PC-3 (cell line): ENCODE measurements at regions of chr1 and their contacts with region 1.

Region 1: GRCh38 chr1:161382214-161383019 is 14.7 kb upstream of the CFAP126 start:
- DNase-seq: peak; percentile 91
- ATAC-seq: peak; percentile 92
- H3K4me3 ChIP-seq: peak overlapping the region; percentile 44; the same call in 1 of the 2 replicates
- H3K27ac ChIP-seq: peak overlapping the region; percentile 87
- H3K4me1 ChIP-seq: peaks cover 22% of the 10 kb centered on the region
- H3K27me3 ChIP-seq: no peaks in the 10 kb centered on the region
- CTCF ChIP-seq: peak; percentile 84

Region 2: DNA sequence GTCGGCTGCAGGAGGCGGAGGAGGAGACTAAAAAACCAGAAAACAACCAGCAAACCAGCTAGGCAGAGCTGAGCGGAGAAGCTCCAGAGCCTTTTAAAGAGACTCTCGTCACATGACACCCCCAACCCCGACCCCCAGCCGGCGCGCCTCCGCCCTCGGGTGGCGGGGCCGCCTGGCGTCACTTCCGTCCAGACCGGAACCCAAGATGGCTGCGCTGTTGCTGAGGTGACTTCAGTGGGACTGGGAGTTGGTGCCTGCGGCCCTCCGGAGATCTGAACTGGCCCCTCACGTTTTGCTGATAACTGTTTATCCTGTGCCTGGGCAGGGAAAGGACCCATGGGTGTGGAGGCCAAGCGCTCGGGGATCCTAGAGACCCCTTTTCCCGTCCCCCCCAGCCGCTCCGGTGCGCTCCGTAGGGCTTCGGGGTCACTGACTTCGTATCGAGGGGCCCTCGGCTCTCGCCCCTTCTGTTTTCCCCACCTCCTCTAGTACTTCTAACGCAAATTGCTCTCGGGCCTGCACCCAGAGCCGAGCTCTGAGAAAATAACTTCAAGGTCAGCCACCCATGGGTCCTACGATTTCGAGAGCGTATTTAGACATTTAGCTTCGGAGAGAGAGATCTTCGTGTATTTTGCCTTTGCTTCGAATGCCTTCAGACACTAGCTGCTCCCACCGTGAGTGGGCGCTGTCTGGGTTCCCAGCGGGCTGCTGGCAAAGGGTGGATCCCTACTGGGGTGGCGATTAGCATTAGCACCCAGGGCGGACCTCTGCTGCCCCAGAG is 68.0 kb before region 1 on chr1 and contains the start of gene SDHC:
- CTCF ChIA-PET with region 1: no interaction called
- POLR2A ChIA-PET with region 1: interaction called, 3 read pairs
- intact Hi-C with region 1: loop called (anchors 2 kb)
- DNase-seq: peak; percentile 90
- ATAC-seq: peak; percentile 97
- H3K4me3 ChIP-seq: peak within 1 kb of the TSS; percentile 86
- H3K27ac ChIP-seq: peak within 1 kb of the TSS; percentile 63
- H3K4me1 ChIP-seq: peaks cover 8% of the 10 kb centered on the region; the same call in 1 of the 2 replicates
- H3K27me3 ChIP-seq: no peaks in the 10 kb centered on the region
- CTCF ChIP-seq: peak; percentile 68
- total RNA-seq, gene SDHC: 26.1 and 30.1 TPM in 2 replicates

Region 3: DNA sequence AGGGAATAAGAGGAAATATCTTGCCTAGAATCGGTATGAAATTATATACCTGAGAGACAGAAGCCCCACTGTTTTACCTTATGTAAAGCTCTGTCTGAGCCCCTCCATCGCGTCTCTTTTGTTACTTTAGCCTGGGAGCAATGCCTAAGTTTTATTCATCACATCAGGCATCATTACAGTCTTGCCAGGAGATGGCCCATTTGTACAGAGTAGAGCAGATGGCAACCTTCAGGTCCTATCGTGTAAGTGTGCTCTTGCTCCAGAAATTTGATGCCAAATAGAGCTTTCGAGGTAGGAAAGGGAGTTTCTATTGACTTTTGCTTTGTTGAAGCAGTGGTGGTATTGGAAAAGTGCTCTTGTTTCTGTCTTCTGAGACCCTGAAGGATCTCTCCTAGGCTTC is 39.6 kb before region 1 on chr1:
- CTCF ChIA-PET with region 1: no interaction called
- POLR2A ChIA-PET with region 1: no interaction called
- intact Hi-C with region 1: no loop called
- DNase-seq: no peak
- ATAC-seq: no peak
- H3K4me3 ChIP-seq: no peak overlapping the region
- H3K27ac ChIP-seq: no peak overlapping the region
- H3K4me1 ChIP-seq: no peaks in the 10 kb centered on the region
- H3K27me3 ChIP-seq: no peaks in the 10 kb centered on the region
- CTCF ChIP-seq: no peak

Region 4: DNA sequence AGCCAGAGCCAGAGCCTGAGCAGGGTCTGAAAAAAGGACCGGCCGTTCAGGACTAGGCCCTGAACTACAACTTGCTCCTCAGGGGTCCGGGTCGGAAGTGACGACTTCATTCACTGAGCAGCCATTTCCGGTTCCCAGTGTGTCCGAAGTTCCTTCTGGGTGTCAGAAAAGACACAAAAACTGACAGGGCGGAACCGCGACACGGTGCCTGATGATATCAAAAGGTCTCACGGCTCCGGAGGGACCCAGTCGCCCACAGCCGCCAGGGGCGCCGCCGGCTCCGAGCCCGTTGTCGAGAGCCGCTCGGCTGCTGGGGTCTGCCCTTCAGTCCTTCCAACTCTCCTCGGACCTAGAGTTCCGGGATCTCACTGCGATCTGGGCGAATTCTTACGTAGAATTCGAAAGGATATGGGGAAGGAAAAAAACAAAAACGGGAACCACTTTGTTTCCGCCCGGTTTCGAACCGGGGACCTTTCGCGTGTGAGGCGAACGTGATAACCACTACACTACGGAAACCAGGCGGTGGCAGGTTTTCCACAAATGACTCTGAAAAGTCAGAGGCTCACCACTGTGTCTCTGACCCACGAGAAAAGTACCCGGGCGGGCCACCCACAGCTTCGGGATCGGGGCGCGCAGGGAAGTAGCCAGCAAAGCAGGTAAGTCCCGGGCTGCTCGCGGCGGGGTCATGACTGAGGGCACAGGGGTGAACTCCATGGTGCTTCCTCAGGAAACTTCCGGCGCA is 17.0 kb after region 1 on chr1:
- CTCF ChIA-PET with region 1: no interaction called
- POLR2A ChIA-PET with region 1: interaction called, 4 read pairs
- intact Hi-C with region 1: loop called (anchors 1 kb)
- DNase-seq: peak; percentile 96
- ATAC-seq: peak; percentile 30
- H3K4me3 ChIP-seq: peak overlapping the region; percentile 71
- H3K27ac ChIP-seq: peak overlapping the region; percentile 94
- H3K4me1 ChIP-seq: peaks cover 60% of the 10 kb centered on the region
- H3K27me3 ChIP-seq: no peaks in the 10 kb centered on the region
- CTCF ChIP-seq: peak; percentile 59